ENCODE measurements at regions of chr2 and their contacts with region 1.

Region 1: DNA sequence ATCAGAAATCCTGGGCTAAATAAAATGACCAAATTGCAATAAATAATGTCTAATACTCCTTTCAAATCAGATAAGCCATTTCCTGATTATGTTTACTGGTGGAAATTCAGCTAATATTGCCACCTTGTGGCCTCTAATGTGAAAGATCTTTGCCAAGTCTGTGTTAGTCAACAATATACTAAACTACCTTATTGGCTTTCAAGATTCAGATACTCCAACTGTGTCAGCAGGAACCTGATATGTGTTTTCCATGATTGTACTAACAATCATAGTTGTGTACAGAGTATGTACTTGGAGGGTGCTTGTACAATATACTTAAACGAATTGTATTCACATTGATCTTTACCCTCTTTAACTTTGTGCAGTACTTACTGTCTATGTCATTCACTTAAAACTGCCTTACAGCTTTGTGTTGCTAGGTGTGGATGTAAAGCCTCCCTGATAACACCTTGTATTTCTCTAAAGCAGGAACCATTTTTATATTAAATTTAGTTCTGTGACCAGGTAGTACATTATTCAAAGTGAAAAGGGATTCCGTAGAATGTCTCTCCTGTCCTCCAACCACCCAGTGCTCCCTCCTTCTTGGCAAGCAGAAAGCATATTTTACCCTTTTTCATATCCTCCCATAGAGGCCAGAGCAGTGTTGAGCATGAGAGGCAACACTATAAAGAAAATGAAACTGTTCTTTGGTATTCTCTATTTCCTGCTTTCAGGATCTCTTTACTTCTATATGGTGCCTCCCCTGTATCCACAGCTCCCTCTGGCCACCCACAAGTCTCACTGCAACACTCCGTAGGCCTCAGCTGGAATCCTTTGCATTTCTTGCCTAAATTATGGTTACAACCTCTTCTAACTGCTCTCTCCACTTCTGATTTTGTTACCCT is 75.2 kb upstream of the C2orf15 start:
- DNase-seq: peak; percentile 20
- ATAC-seq: peak; percentile 96
- H3K4me3 ChIP-seq: no peak overlapping the region
- H3K27ac ChIP-seq: no peak overlapping the region
- H3K4me1 ChIP-seq: no peaks in the 10 kb centered on the region
- H3K27me3 ChIP-seq: peaks cover 11% of the 10 kb centered on the region; the same call in 1 of the 2 replicates
- CTCF ChIP-seq: peak; percentile 64

Region 2: DNA sequence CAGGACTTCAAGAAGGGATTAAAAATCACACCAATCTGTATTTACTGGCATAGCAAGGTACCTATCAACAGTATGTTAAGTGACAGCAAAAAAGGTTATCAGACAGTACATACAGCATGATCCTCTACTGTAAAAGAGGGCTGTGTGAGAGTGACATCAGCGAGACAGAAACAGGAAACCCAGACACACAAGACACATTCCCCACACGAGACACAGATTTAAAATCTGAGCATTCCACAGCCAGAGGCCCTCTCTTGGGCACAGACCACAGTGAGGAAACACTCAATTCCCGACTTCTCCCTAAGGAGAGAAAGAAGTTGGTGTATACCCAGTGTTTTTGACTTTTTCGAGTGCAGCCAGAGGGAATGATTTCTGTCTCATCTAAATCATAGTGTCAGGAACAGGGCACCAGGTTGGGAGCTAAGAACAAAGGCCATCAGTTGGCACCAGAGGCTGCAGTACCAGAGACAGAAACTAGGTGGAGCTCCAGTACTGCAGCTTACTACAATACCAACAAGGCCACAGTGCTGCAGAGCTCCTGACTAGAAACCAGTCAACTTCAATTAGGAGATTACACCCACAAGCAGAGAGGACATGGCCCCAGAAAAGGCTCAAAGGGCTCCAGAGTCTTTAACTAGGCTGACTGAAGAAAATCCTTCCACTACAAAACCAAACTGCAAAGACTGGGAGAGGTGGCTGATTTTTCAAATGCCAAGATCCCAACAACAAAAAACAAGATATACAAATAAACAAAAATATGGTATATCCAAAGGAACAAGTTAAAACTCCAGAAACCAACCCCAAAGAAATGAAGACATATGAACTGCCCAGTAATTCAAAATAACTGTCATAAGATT is 417.0 kb before region 1 on chr2:
- CTCF ChIA-PET with region 1: interaction called, 15 read pairs
- POLR2A ChIA-PET with region 1: no interaction called
- in situ Hi-C with region 1: no loop called
- intact Hi-C with region 1: loop called (anchors 1 kb)
- DNase-seq: peak; percentile 73
- ATAC-seq: peak; percentile 99
- H3K4me3 ChIP-seq: no peak overlapping the region
- H3K27ac ChIP-seq: no peak overlapping the region
- H3K4me1 ChIP-seq: no peaks in the 10 kb centered on the region
- H3K27me3 ChIP-seq: no peaks in the 10 kb centered on the region; the same call in 1 of the 2 replicates
- CTCF ChIP-seq: peak; percentile 98

Region 3: GRCh38 chr2:98842136-98842535 is 224.2 kb before region 1 on chr2:
- CTCF ChIA-PET with region 1: interaction called, 8 read pairs
- POLR2A ChIA-PET with region 1: no interaction called
- in situ Hi-C with region 1: no loop called
- intact Hi-C with region 1: loop called (anchors 5 kb)
- DNase-seq: no peak
- ATAC-seq: no peak
- H3K4me3 ChIP-seq: no peak overlapping the region
- H3K27ac ChIP-seq: no peak overlapping the region
- H3K4me1 ChIP-seq: peaks cover 4% of the 10 kb centered on the region; the same call in 1 of the 2 replicates
- H3K27me3 ChIP-seq: no peaks in the 10 kb centered on the region
- CTCF ChIP-seq: no peak